Colonic mucosa (tissue), 4 donors: ENCODE measurements at regions of chr10 and their contacts with region 1.

Region 1: DNA sequence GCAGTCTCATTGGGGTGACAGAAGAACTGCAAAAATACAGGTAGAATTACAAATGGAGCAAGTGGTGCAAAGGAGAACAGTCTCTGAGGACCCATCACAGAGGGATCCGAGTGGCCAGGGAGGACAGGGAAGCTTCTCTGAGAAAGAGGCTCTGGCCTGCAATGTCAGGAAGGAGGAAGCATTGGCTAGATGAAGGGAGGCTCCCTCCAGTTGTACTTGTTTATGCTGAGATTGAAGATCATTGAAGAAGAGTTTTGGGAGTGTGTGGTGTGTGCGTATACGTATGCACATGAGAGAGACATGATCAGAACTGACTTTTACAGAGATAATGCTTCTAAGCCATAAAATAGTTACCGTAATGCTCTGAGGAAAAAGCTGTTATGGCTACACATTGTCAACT is 274.7 kb upstream of the FZD8 start:
- DNase-seq: no peak
- H3K4me3 ChIP-seq: no peak overlapping the region
- H3K27ac ChIP-seq: no peak overlapping the region
- H3K4me1 ChIP-seq: no peaks in the 10 kb centered on the region
- H3K27me3 ChIP-seq: no peaks in the 10 kb centered on the region
- CTCF ChIP-seq: no peak

Region 2: GRCh38 chr10:35517431-35518181 is 399.2 kb before region 1 on chr10:
- intact Hi-C with region 1: no loop called
- DNase-seq: no peak
- H3K4me3 ChIP-seq: no peak overlapping the region
- H3K27ac ChIP-seq: no peak overlapping the region
- H3K4me1 ChIP-seq: no peaks in the 10 kb centered on the region
- H3K27me3 ChIP-seq: no peaks in the 10 kb centered on the region
- CTCF ChIP-seq: no peak

Region 3: DNA sequence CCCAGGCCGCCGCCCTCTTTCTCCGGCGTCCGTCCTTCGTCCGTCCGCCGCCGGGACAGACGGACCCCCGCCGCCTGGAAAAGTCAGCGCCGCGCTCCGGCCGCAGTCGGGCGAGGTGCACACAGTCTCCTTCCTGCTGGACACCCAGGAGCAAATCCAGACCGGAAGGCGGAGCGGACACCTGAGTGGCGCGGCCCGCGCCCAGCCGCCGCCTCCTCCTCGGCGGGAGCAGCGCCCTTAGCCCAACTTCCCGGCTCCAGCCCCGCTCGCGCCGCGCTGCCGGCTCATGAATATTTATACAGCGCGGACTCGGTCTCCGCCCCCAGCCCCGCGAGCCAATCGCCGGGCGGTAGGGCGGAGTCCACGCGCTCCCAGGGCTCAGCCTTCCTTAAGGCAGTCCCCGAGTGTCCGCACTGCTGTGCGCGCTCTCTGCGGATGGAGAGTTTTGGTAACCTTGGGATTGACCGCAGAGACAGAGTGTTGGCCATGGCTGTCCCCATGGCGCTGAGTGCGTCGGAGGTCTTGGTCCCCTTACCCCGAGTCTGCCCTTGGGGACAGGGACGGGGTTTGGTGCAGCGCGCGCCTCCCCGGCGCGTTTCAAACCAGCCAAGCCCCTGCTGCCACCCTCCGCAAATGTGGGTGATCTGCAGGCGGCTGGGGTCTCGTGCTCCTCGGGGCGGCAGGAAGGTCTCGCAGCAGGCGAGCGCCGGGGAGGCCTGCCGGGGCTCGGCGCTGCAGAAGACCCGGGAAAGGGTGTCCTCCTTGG is 274.6 kb before region 1 on chr10 and contains the start of gene FZD8:
- intact Hi-C with region 1: loop called (anchors 5 kb)
- DNase-seq: peak; percentile 92
- H3K4me3 ChIP-seq: peak within 1 kb of the TSS; percentile 78
- H3K27ac ChIP-seq: peak within 1 kb of the TSS; percentile 88
- H3K4me1 ChIP-seq: peaks cover 8% of the 10 kb centered on the region
- H3K27me3 ChIP-seq: no peaks in the 10 kb centered on the region
- CTCF ChIP-seq: no peak
- total RNA-seq, gene FZD8: 11.0 to 11.7 TPM